Activated CD4-positive, alpha-beta T cell treated with anti-CD3 and anti-CD28 coated beads, Interleukin-2, amount 10 ng/mL, durations not matched to agents 24 days and 14 days (primary cell): ENCODE measurements at regions of chr20 and their contacts with region 1.

Region 1: GRCh38 chr20:37095599-37096414 is at the start of gene RBL1:
- DNase-seq: peak; percentile 96
- H3K4me3 Mint-ChIP-seq: peak within 1 kb of the TSS; percentile 97
- H3K27ac Mint-ChIP-seq: peak within 1 kb of the TSS; percentile 99
- H3K4me1 Mint-ChIP-seq: peaks cover 29% of the 10 kb centered on the region
- H3K27me3 Mint-ChIP-seq: peaks cover 5% of the 10 kb centered on the region
- total RNA-seq, gene RBL1: 50.9 and 52.7 TPM in 2 replicates

Region 2: GRCh38 chr20:37081717-37082289 is 14.0 kb before region 1 on chr20:
- intact Hi-C with region 1: loop called (anchors 2 kb)
- DNase-seq: peak; percentile 80
- H3K4me3 Mint-ChIP-seq: no peak overlapping the region
- H3K27ac Mint-ChIP-seq: peak overlapping the region; percentile 49
- H3K4me1 Mint-ChIP-seq: peaks cover 32% of the 10 kb centered on the region
- H3K27me3 Mint-ChIP-seq: no peaks in the 10 kb centered on the region

Region 3: GRCh38 chr20:37178839-37179670 is 83.2 kb after region 1 on chr20 and contains the starts of genes MROH8 and RPN2:
- intact Hi-C with region 1: loop called (anchors 1 kb)
- DNase-seq: peak; percentile 98
- H3K4me3 Mint-ChIP-seq: peak within 1 kb of the TSS; percentile 92
- H3K27ac Mint-ChIP-seq: peak within 1 kb of the TSS; percentile 93
- H3K4me1 Mint-ChIP-seq: peaks cover 26% of the 10 kb centered on the region
- H3K27me3 Mint-ChIP-seq: peaks cover 6% of the 10 kb centered on the region
- total RNA-seq, gene MROH8: 0.63 and 1.3 TPM in 2 replicates
- total RNA-seq, gene RPN2: 208 and 213 TPM in 2 replicates

Region 4: GRCh38 chr20:37527638-37528441 is 432.0 kb after region 1 on chr20 and contains the start of gene BLCAP:
- intact Hi-C with region 1: loop called (anchors 5 kb)
- DNase-seq: peak; percentile 98
- H3K4me3 Mint-ChIP-seq: peak within 1 kb of the TSS; percentile 92
- H3K27ac Mint-ChIP-seq: peak within 1 kb of the TSS; percentile 100
- H3K4me1 Mint-ChIP-seq: peaks cover 42% of the 10 kb centered on the region
- H3K27me3 Mint-ChIP-seq: peaks cover 5% of the 10 kb centered on the region
- total RNA-seq, gene BLCAP: 31.7 and 31.9 TPM in 2 replicates